Lower leg skin (tissue), 4 donors: ENCODE measurements at regions of chr16 and their contacts with region 1.

Region 1: DNA sequence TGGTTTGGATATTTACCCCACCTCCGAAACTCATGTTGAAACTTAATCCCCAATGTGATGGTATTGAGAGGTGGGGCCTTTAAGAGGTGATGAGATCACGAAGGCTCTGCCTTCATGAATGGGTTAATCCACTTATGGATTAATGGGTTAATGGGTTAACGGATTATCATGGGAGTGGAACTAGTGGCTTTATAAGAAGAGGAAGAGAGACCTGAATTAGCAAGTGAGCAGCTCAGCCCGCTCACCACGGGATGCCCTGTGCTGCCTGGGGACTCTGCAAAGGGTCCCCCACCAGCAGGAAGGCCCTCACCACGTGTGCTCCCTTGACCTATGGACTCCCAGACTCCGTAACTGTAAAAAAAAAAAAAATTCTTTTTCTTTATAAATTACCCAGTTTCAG is 16.5 kb upstream of the GPRC5B start:
- DNase-seq: no peak
- H3K4me3 ChIP-seq: no peak overlapping the region
- CTCF ChIP-seq: no peak
- POLR2A ChIP-seq: no peak

Region 2: GRCh38 chr16:20393801-20394577 is 492.8 kb after region 1 on chr16:
- intact Hi-C with region 1: loop called (anchors 5 kb)
- DNase-seq: peak in 1 of 2 donors; percentile 66
- H3K4me3 ChIP-seq: no peak overlapping the region
- CTCF ChIP-seq: no peak
- POLR2A ChIP-seq: no peak